ENCODE measurements at regions of chr2 and their contacts with region 1.

Region 1: DNA sequence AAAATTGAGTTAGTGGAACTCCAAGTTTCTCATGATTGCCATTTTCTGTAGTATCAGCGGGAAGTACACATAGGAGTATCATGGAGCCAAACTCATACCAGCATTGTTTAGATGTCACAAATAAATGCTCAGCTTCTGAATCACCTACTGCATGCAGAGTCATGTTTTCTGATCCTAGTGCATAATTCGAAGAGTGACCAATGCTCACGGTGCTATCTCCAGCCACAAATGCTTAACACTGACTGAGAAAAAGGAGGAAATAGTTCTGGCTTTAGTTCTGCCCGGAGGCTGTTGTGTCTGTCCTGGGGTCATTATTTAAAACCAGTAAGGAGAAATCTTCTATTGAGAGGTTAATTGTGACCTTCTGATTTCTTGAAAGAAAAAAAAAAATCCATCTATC is 45.4 kb upstream of the LRATD1 start:
- DNase-seq: no peak
- ATAC-seq: no peak
- H3K4me3 ChIP-seq: no peak overlapping the region
- H3K27ac ChIP-seq: no peak overlapping the region
- H3K4me1 ChIP-seq: no peaks in the 10 kb centered on the region
- H3K27me3 ChIP-seq: no peaks in the 10 kb centered on the region
- CTCF ChIP-seq: no peak
- EP300 ChIP-seq: no peak
- POLR2A ChIP-seq: no peak
- RAD21 ChIP-seq: no peak

Region 2: GRCh38 chr2:14554849-14555545 is 32.1 kb before region 1 on chr2:
- CTCF ChIA-PET with region 1: no interaction called
- POLR2A ChIA-PET with region 1: no interaction called
- in situ Hi-C with region 1: no loop called
- intact Hi-C with region 1: loop called (anchors 1 kb)
- DNase-seq: no peak
- ATAC-seq: no peak
- H3K4me3 ChIP-seq: no peak overlapping the region
- H3K27ac ChIP-seq: no peak overlapping the region
- H3K4me1 ChIP-seq: no peaks in the 10 kb centered on the region
- H3K27me3 ChIP-seq: no peaks in the 10 kb centered on the region
- CTCF ChIP-seq: no peak
- EP300 ChIP-seq: no peak
- POLR2A ChIP-seq: no peak
- RAD21 ChIP-seq: no peak

Region 3: GRCh38 chr2:15412779-15413178 is 825.6 kb after region 1 on chr2:
- CTCF ChIA-PET with region 1: no interaction called
- POLR2A ChIA-PET with region 1: no interaction called
- in situ Hi-C with region 1: no loop called
- intact Hi-C with region 1: no loop called
- DNase-seq: no peak
- ATAC-seq: no peak
- H3K4me3 ChIP-seq: no peak overlapping the region
- H3K27ac ChIP-seq: no peak overlapping the region
- H3K4me1 ChIP-seq: no peaks in the 10 kb centered on the region
- H3K27me3 ChIP-seq: no peaks in the 10 kb centered on the region
- CTCF ChIP-seq: no peak
- EP300 ChIP-seq: no peak
- POLR2A ChIP-seq: no peak
- RAD21 ChIP-seq: no peak

Measured in HepG2 (cell line).